Activated CD4-positive, alpha-beta T cell treated with anti-CD3 and anti-CD28 coated beads for 36 hours (primary cell): ENCODE measurements at regions of chrX and their contacts with region 1.

Region 1: DNA sequence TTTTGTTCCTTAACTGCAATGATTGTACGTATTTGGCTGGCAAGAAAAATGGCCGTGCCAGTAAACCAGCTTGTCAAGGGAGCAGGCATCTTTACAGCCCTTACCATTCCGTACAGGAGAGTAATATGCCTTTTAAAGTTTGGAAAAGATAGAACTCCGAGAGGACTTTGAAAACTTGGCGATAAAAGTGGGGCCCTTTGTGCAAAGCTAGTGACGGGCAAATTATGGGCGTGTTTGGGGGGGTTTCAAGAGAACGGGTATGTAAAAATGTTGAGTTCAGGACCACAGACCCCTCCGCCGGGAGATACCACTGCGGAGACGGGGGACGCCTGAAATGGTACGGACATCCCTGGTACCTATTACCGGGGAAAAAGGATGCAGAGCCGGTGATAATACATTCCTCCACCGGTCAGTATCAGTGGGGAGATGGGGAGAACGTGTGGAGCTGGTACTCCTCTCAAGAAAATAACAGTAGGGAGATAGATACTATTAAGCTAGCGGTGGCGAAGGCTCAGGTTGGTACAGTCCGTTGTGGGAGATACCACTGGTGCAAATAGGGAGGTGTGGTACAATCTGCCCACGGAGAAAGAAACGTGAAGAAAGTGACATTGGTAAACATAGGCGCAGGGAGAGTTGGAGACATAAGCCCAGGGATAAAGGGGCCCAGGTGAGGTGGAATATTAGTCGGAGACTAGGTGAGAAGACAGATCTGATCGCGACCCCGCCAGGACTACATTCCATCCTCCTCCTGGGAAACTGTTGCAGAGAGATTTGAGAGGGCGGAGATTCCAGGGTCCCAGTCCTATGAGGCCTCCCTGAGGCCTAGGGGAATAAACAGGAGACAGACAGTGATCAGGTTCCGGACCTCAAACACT is 14.5 kb downstream of the SPACA5 start:
- DNase-seq: peak; percentile 84
- ATAC-seq: peak; percentile 57
- H3K4me3 Mint-ChIP-seq: peak overlapping the region; percentile 85
- H3K27ac Mint-ChIP-seq: peak overlapping the region; percentile 99
- H3K4me1 Mint-ChIP-seq: peaks cover 14% of the 10 kb centered on the region
- H3K27me3 Mint-ChIP-seq: no peaks in the 10 kb centered on the region

Region 2: DNA sequence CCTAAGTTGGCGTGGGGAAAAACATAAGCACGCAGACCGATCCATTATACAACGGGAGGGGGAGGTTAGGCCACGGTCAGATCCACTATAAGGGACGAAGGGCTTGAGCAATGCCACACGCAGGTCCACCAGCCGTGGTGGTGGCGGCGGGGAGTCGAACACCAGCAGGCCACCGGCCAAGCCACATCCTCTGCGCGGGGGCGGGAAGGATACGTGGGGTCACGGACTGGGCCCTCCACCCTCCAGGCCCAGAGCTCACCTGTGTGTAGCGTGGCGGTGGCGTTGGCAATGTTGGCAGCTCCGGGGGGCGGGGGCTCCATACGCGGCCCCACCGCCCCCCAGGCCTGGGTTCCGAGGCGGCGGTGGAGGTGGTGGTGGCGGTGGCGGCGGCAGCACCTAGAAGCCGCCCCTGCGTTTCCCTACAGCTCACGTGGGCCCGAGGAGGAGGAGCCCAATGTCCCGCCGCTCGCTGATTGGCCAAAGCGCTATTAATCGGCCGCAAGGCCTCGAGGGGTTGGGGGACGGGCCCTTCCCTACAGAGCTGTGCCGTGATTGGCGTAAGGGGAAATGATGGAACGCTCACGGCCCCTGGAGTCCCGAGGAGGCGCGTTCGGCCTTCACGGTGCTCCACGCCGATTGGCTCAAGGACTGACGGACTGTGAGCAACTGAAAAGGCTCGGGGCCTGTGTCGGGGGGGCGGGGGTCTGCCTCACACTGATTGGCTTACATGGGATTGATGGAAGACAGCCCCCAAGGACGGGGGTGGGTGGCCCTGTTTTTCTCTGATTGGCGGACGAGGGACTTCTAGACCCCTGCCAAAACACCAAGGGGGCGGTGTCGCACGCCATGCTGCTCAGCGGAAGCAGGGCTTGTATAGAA is 370.9 kb before region 1 on chrX and contains the start of gene ELK1:
- CTCF ChIA-PET with region 1: no interaction called
- POLR2A ChIA-PET with region 1: interaction called, 3 read pairs
- intact Hi-C with region 1: loop called in 1 of 2 experiments (anchors 10 kb)
- DNase-seq: peak; percentile 93
- ATAC-seq: peak; percentile 95
- H3K4me3 Mint-ChIP-seq: peak within 1 kb of the TSS; percentile 92
- H3K27ac Mint-ChIP-seq: peak within 1 kb of the TSS; percentile 97
- H3K4me1 Mint-ChIP-seq: peaks cover 44% of the 10 kb centered on the region
- H3K27me3 Mint-ChIP-seq: no peaks in the 10 kb centered on the region
- total RNA-seq, gene ELK1: 96.8 to 117 TPM

Region 3: GRCh38 chrX:47828984-47829383 is 192.3 kb before region 1 on chrX:
- CTCF ChIA-PET with region 1: interaction called, 15 read pairs
- POLR2A ChIA-PET with region 1: no interaction called
- intact Hi-C with region 1: loop called (anchors 1 kb)
- DNase-seq: no peak
- ATAC-seq: no peak
- H3K4me3 Mint-ChIP-seq: no peak overlapping the region
- H3K27ac Mint-ChIP-seq: no peak overlapping the region
- H3K4me1 Mint-ChIP-seq: no peaks in the 10 kb centered on the region
- H3K27me3 Mint-ChIP-seq: no peaks in the 10 kb centered on the region

Region 4: DNA sequence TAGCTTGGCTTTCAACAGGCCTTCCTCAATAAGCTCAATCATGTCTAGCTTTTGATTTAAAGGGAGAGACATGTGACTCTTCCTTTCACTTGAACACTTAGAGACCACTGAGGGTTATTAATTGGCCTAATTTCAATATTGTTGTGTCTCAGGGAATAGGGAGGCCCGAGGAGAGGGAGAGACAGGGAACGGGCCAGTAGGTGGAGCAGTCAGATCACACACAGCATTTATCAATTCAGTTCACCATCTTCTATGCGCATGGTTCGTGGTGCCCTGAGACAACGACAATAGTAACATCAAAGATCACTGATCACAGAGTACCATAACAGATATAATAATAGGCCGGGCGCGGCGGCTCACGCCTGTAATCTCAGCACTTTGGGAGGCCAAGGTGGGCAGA is 166.8 kb before region 1 on chrX:
- CTCF ChIA-PET with region 1: interaction called, 3 read pairs
- POLR2A ChIA-PET with region 1: no interaction called
- intact Hi-C with region 1: loop called (anchors 1 kb)
- DNase-seq: peak; percentile 43
- ATAC-seq: peak; percentile 47
- H3K4me3 Mint-ChIP-seq: no peak overlapping the region
- H3K27ac Mint-ChIP-seq: no peak overlapping the region
- H3K4me1 Mint-ChIP-seq: peaks cover 7% of the 10 kb centered on the region
- H3K27me3 Mint-ChIP-seq: no peaks in the 10 kb centered on the region

Region 5: GRCh38 chrX:47958761-47959342 is 62.4 kb before region 1 on chrX:
- CTCF ChIA-PET with region 1: interaction called, 3 read pairs
- POLR2A ChIA-PET with region 1: no interaction called
- intact Hi-C with region 1: loop called (anchors 1 kb)
- DNase-seq: peak; percentile 29
- ATAC-seq: peak; percentile 78
- H3K4me3 Mint-ChIP-seq: no peak overlapping the region
- H3K27ac Mint-ChIP-seq: no peak overlapping the region
- H3K4me1 Mint-ChIP-seq: no peaks in the 10 kb centered on the region
- H3K27me3 Mint-ChIP-seq: no peaks in the 10 kb centered on the region

Region 6: GRCh38 chrX:48493890-48494364 is 472.7 kb after region 1 on chrX:
- CTCF ChIA-PET with region 1: no interaction called
- POLR2A ChIA-PET with region 1: no interaction called
- intact Hi-C with region 1: loop called in 1 of 2 experiments (anchors 2 kb)
- DNase-seq: peak; percentile 52
- ATAC-seq: peak; percentile 44
- H3K4me3 Mint-ChIP-seq: no peak overlapping the region
- H3K27ac Mint-ChIP-seq: no peak overlapping the region
- H3K4me1 Mint-ChIP-seq: no peaks in the 10 kb centered on the region
- H3K27me3 Mint-ChIP-seq: no peaks in the 10 kb centered on the region